T-cell (primary cell): ENCODE measurements at regions of chr3 and their contacts with region 1.

Region 1: GRCh38 chr3:3765661-3766060 is 33.6 kb upstream of the LRRN1 start:
- DNase-seq: no peak
- ATAC-seq: no peak
- H3K4me3 ChIP-seq: no peak overlapping the region
- H3K4me3 Mint-ChIP-seq: no peak overlapping the region
- H3K27ac ChIP-seq: no peak overlapping the region
- H3K27ac Mint-ChIP-seq: no peak overlapping the region
- H3K4me1 ChIP-seq: no peaks in the 10 kb centered on the region
- H3K4me1 Mint-ChIP-seq: no peaks in the 10 kb centered on the region
- H3K27me3 ChIP-seq: no peaks in the 10 kb centered on the region
- H3K27me3 Mint-ChIP-seq: no peaks in the 10 kb centered on the region

Region 2: GRCh38 chr3:2765002-2765579 is 1000.6 kb before region 1 on chr3:
- CTCF ChIA-PET with region 1: interaction called in 1 of 2 experiments, 10 read pairs
- POLR2A ChIA-PET with region 1: no interaction called
- DNase-seq: peak in 6 of 35 experiments; percentile 1 to 33 (median 1)
- ATAC-seq: peak in 1 of 4 experiments; percentile 68
- H3K4me3 ChIP-seq: no peak overlapping the region
- H3K4me3 Mint-ChIP-seq: no peak overlapping the region
- H3K27ac ChIP-seq: no peak overlapping the region
- H3K27ac Mint-ChIP-seq: no peak overlapping the region
- H3K4me1 ChIP-seq: no peaks in the 10 kb centered on the region
- H3K4me1 Mint-ChIP-seq: peaks cover 0 to 4% (median 2%) of the 10 kb centered on the region in 3 donors
- H3K27me3 ChIP-seq: no peaks in the 10 kb centered on the region
- H3K27me3 Mint-ChIP-seq: peaks cover 12 to 16% of the 10 kb centered on the region in 2 donors

Region 3: GRCh38 chr3:3516996-3517395 is 248.7 kb before region 1 on chr3:
- CTCF ChIA-PET with region 1: no interaction called
- POLR2A ChIA-PET with region 1: interaction called in 1 of 2 experiments, 12 read pairs
- DNase-seq: no peak
- ATAC-seq: no peak
- H3K4me3 ChIP-seq: no peak overlapping the region
- H3K4me3 Mint-ChIP-seq: no peak overlapping the region
- H3K27ac ChIP-seq: no peak overlapping the region
- H3K27ac Mint-ChIP-seq: no peak overlapping the region
- H3K4me1 ChIP-seq: no peaks in the 10 kb centered on the region
- H3K4me1 Mint-ChIP-seq: no peaks in the 10 kb centered on the region
- H3K27me3 ChIP-seq: no peaks in the 10 kb centered on the region
- H3K27me3 Mint-ChIP-seq: peaks cover 0 to 3% of the 10 kb centered on the region in 2 donors

Region 4: GRCh38 chr3:3654916-3655315 is 110.7 kb before region 1 on chr3:
- CTCF ChIA-PET with region 1: no interaction called
- POLR2A ChIA-PET with region 1: no interaction called
- DNase-seq: no peak
- ATAC-seq: no peak
- H3K4me3 ChIP-seq: no peak overlapping the region
- H3K4me3 Mint-ChIP-seq: no peak overlapping the region
- H3K27ac ChIP-seq: no peak overlapping the region
- H3K27ac Mint-ChIP-seq: no peak overlapping the region
- H3K4me1 ChIP-seq: no peaks in the 10 kb centered on the region
- H3K4me1 Mint-ChIP-seq: no peaks in the 10 kb centered on the region
- H3K27me3 ChIP-seq: no peaks in the 10 kb centered on the region
- H3K27me3 Mint-ChIP-seq: peaks cover 0 to 6% of the 10 kb centered on the region in 2 donors

Region 5: DNA sequence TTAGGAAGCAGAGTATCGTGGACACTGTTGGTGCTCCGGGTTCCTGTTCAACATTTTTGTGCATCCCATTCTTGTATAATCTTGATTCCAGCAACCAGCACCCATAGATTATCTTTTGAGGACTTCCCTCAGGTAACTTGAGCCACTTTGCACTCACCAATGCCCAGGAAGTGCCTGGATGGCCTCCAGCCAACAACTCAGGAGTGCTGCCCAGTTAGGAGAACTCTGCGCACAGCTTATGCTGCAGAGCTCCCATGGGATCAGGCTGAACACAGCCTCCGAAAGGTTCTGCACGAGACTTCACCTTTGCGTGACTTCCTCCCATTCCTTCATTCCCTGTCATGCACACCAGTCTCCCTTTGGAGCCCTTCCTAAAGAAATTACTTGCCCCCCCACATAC is 30.8 kb before region 1 on chr3:
- CTCF ChIA-PET with region 1: no interaction called
- POLR2A ChIA-PET with region 1: no interaction called
- DNase-seq: no peak
- ATAC-seq: no peak
- H3K4me3 ChIP-seq: no peak overlapping the region
- H3K4me3 Mint-ChIP-seq: no peak overlapping the region
- H3K27ac ChIP-seq: no peak overlapping the region
- H3K27ac Mint-ChIP-seq: no peak overlapping the region
- H3K4me1 ChIP-seq: no peaks in the 10 kb centered on the region
- H3K4me1 Mint-ChIP-seq: no peaks in the 10 kb centered on the region
- H3K27me3 ChIP-seq: no peaks in the 10 kb centered on the region
- H3K27me3 Mint-ChIP-seq: no peaks in the 10 kb centered on the region

Region 6: GRCh38 chr3:3778641-3779270 is 13.1 kb after region 1 on chr3:
- CTCF ChIA-PET with region 1: no interaction called
- POLR2A ChIA-PET with region 1: no interaction called
- DNase-seq: no peak
- ATAC-seq: no peak
- H3K4me3 ChIP-seq: no peak overlapping the region
- H3K4me3 Mint-ChIP-seq: no peak overlapping the region
- H3K27ac ChIP-seq: no peak overlapping the region
- H3K27ac Mint-ChIP-seq: no peak overlapping the region
- H3K4me1 ChIP-seq: no peaks in the 10 kb centered on the region
- H3K4me1 Mint-ChIP-seq: no peaks in the 10 kb centered on the region
- H3K27me3 ChIP-seq: no peaks in the 10 kb centered on the region
- H3K27me3 Mint-ChIP-seq: no peaks in the 10 kb centered on the region